ENCODE measurements at regions of chr11 and their contacts with region 1.

Region 1: GRCh38 chr11:46593550-46594373 is at the start of gene AMBRA1:
- DNase-seq: peak; percentile 90
- H3K4me3 Mint-ChIP-seq: peak within 1 kb of the TSS; percentile 88
- H3K27ac Mint-ChIP-seq: peak within 1 kb of the TSS; percentile 71
- H3K4me1 Mint-ChIP-seq: peaks cover 56% of the 10 kb centered on the region
- H3K27me3 Mint-ChIP-seq: no peaks in the 10 kb centered on the region
- total RNA-seq, gene AMBRA1: 34.6 to 35.5 TPM

Region 2: GRCh38 chr11:46554205-46555055 is 39.3 kb before region 1 on chr11:
- CTCF ChIA-PET with region 1: interaction called, 6 read pairs
- POLR2A ChIA-PET with region 1: interaction called, 12 read pairs
- DNase-seq: no peak
- H3K4me3 Mint-ChIP-seq: no peak overlapping the region
- H3K27ac Mint-ChIP-seq: peak overlapping the region; percentile 38
- H3K4me1 Mint-ChIP-seq: peaks cover 49% of the 10 kb centered on the region
- H3K27me3 Mint-ChIP-seq: no peaks in the 10 kb centered on the region

Region 3: GRCh38 chr11:46560300-46560991 is 33.3 kb before region 1 on chr11:
- CTCF ChIA-PET with region 1: interaction called, 6 read pairs
- POLR2A ChIA-PET with region 1: interaction called, 23 read pairs
- DNase-seq: peak; percentile 27
- H3K4me3 Mint-ChIP-seq: peak overlapping the region; percentile 95
- H3K27ac Mint-ChIP-seq: peak overlapping the region; percentile 96
- H3K4me1 Mint-ChIP-seq: peaks cover 56% of the 10 kb centered on the region
- H3K27me3 Mint-ChIP-seq: no peaks in the 10 kb centered on the region

Region 4: GRCh38 chr11:46611526-46612304 is 18.0 kb after region 1 on chr11:
- CTCF ChIA-PET with region 1: interaction called, 8 read pairs
- POLR2A ChIA-PET with region 1: interaction called, 43 read pairs
- DNase-seq: no peak
- H3K4me3 Mint-ChIP-seq: no peak overlapping the region
- H3K27ac Mint-ChIP-seq: no peak overlapping the region
- H3K4me1 Mint-ChIP-seq: peaks cover 25% of the 10 kb centered on the region
- H3K27me3 Mint-ChIP-seq: no peaks in the 10 kb centered on the region

Region 5: GRCh38 chr11:46616998-46617675 is 23.4 kb after region 1 on chr11 and contains the starts of genes ATG13 and HARBI1:
- CTCF ChIA-PET with region 1: interaction called, 8 read pairs
- POLR2A ChIA-PET with region 1: interaction called, 43 read pairs
- DNase-seq: peak; percentile 93
- H3K4me3 Mint-ChIP-seq: peak within 1 kb of the TSS; percentile 90
- H3K27ac Mint-ChIP-seq: peak within 1 kb of the TSS; percentile 96
- H3K4me1 Mint-ChIP-seq: peaks cover 48% of the 10 kb centered on the region
- H3K27me3 Mint-ChIP-seq: no peaks in the 10 kb centered on the region
- total RNA-seq, gene ATG13: 70.4 to 72.1 TPM
- total RNA-seq, gene HARBI1: 5.6 to 7.3 TPM

Region 6: DNA sequence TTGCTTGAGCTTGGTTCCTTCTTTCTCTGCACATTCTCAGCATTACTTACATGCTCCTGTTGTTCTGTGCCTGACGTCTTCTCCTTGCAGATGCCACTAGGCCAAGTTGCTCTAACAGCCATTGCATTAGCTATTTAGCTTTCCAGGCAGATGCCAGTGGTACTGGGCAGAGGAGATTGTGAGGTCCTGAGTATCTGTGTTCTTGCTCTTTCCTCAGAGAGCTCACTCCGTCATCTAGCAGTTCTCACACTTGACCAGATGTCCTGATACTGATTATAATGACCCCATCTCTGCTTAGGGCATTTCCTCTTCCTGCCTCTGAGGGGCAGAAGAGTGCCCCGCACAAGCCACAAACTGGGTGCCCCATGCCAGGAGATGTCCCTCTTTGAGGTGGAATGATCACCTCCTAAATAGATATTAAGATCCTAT is 76.0 kb after region 1 on chr11:
- CTCF ChIA-PET with region 1: interaction called, 5 read pairs
- POLR2A ChIA-PET with region 1: interaction called, 12 read pairs
- DNase-seq: no peak
- H3K4me3 Mint-ChIP-seq: no peak overlapping the region
- H3K27ac Mint-ChIP-seq: peak overlapping the region; percentile 98
- H3K4me1 Mint-ChIP-seq: peaks cover 40% of the 10 kb centered on the region
- H3K27me3 Mint-ChIP-seq: no peaks in the 10 kb centered on the region

Region 7: GRCh38 chr11:46700241-46701077 is 106.7 kb after region 1 on chr11 and contains the starts of genes ARHGAP1 and ZNF408:
- CTCF ChIA-PET with region 1: no interaction called
- POLR2A ChIA-PET with region 1: interaction called, 11 read pairs
- DNase-seq: peak; percentile 100
- H3K4me3 Mint-ChIP-seq: peak within 1 kb of the TSS; percentile 98
- H3K27ac Mint-ChIP-seq: peak within 1 kb of the TSS; percentile 96
- H3K4me1 Mint-ChIP-seq: peaks cover 51% of the 10 kb centered on the region
- H3K27me3 Mint-ChIP-seq: no peaks in the 10 kb centered on the region
- total RNA-seq, gene ARHGAP1: 77.8 to 79.7 TPM
- total RNA-seq, gene ZNF408: 17.1 to 17.5 TPM

Region 8: GRCh38 chr11:46718155-46719019 is 124.6 kb after region 1 on chr11:
- CTCF ChIA-PET with region 1: no interaction called
- POLR2A ChIA-PET with region 1: no interaction called
- DNase-seq: no peak
- H3K4me3 Mint-ChIP-seq: no peak overlapping the region
- H3K27ac Mint-ChIP-seq: no peak overlapping the region
- H3K4me1 Mint-ChIP-seq: peaks cover 8% of the 10 kb centered on the region
- H3K27me3 Mint-ChIP-seq: no peaks in the 10 kb centered on the region

Measured in activated CD4-positive, alpha-beta memory T cell treated with anti-CD3 and anti-CD28 coated beads, Interleukin-2, amount 10 ng/mL, durations not matched to agents 7 days and 5 days (primary cell).